ENCODE measurements at regions of chr12 and their contacts with region 1.

Region 1: DNA sequence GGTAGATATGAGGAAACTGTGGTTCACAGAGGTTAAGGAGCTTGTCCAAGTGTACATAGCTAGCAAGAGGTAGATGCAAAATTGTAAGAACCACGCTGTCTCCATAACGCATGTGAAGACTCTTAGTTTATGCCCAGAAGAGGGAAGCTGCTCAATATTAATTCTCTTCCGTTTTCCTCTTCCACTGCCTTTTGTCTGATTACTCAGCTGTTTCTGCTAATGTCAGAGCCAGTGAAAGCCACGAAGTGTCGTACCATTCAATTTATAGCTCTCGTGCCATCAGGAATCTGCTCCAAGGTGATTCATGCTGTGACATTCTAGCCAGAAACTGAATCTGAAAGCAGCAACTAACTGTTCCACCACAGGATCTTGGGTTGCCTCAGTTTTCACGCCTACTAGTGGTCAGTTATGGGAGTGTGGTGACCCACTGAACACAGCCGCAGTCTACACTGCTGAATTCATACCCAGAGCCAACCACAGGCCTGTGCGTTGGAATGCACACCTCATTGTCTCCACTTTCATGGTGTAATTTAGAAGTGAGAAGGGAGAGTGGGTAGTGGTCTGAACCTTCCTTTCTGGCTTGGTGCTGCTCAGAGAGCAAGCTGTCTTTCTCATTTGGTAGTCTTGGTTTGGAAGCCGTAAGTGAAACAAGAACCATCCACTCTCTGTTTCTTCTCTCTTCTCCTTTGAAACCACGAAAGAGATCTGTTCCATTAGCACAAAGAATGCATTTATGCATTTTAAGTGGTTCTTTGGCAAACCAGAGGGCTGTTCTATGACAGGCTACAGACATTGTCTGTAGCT is 74.2 kb upstream of the NAP1L1 start:
- DNase-seq: peak; percentile 78
- H3K4me3 Mint-ChIP-seq: peak overlapping the region; percentile 36
- H3K27ac Mint-ChIP-seq: peak overlapping the region; percentile 48
- H3K4me1 Mint-ChIP-seq: peaks cover 9% of the 10 kb centered on the region
- H3K27me3 Mint-ChIP-seq: no peaks in the 10 kb centered on the region
- CTCF ChIP-seq: peak; percentile 73

Region 2: GRCh38 chr12:75792687-75793086 is 366.0 kb before region 1 on chr12:
- CTCF ChIA-PET with region 1: no interaction called
- intact Hi-C with region 1: no loop called
- DNase-seq: no peak
- H3K4me3 Mint-ChIP-seq: no peak overlapping the region
- H3K27ac Mint-ChIP-seq: no peak overlapping the region
- H3K4me1 Mint-ChIP-seq: peaks cover 24% of the 10 kb centered on the region
- H3K27me3 Mint-ChIP-seq: no peaks in the 10 kb centered on the region
- CTCF ChIP-seq: no peak

Region 3: DNA sequence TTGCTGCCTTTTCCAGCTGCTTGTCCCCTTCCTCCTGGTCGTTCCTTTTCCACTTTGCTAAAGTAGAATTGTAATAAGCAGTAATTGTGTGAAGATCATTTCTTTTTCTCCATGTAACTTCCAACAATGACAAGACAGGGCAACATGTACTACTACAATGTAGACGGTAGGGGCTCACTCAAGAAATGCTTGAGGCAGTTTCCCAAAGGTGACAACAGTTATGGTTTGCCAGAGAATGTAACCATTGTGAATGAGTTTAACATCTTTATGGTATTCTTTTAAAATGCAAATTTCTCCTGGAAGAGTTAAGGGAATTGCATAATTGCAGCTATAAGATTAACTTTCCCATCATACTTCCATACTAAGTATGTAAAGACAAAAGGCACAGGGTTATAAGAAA is 103.3 kb before region 1 on chr12:
- CTCF ChIA-PET with region 1: no interaction called
- intact Hi-C with region 1: loop called (anchors 10 kb)
- DNase-seq: no peak
- H3K4me3 Mint-ChIP-seq: no peak overlapping the region
- H3K27ac Mint-ChIP-seq: no peak overlapping the region
- H3K4me1 Mint-ChIP-seq: no peaks in the 10 kb centered on the region
- H3K27me3 Mint-ChIP-seq: no peaks in the 10 kb centered on the region
- CTCF ChIP-seq: no peak

Region 4: GRCh38 chr12:76083904-76084862 is 74.5 kb before region 1 on chr12 and contains the start of gene NAP1L1:
- CTCF ChIA-PET with region 1: no interaction called
- intact Hi-C with region 1: loop called (anchors 2 kb)
- DNase-seq: peak; percentile 98
- H3K4me3 Mint-ChIP-seq: peak within 1 kb of the TSS; percentile 99
- H3K27ac Mint-ChIP-seq: peak within 1 kb of the TSS; percentile 97
- H3K4me1 Mint-ChIP-seq: peaks cover 31% of the 10 kb centered on the region
- H3K27me3 Mint-ChIP-seq: no peaks in the 10 kb centered on the region
- CTCF ChIP-seq: no peak
- total RNA-seq, gene NAP1L1: 394 and 467 TPM in 2 replicates